Colonic mucosa (tissue), 4 donors: ENCODE measurements at regions of chr6 and their contacts with region 1.

Region 1: GRCh38 chr6:123074616-123075015 is 78.6 kb downstream of the CLVS2 start:
- DNase-seq: no peak
- H3K4me3 ChIP-seq: no peak overlapping the region
- H3K27ac ChIP-seq: no peak overlapping the region
- H3K4me1 ChIP-seq: no peaks in the 10 kb centered on the region
- H3K27me3 ChIP-seq: no peaks in the 10 kb centered on the region
- CTCF ChIP-seq: no peak

Region 2: DNA sequence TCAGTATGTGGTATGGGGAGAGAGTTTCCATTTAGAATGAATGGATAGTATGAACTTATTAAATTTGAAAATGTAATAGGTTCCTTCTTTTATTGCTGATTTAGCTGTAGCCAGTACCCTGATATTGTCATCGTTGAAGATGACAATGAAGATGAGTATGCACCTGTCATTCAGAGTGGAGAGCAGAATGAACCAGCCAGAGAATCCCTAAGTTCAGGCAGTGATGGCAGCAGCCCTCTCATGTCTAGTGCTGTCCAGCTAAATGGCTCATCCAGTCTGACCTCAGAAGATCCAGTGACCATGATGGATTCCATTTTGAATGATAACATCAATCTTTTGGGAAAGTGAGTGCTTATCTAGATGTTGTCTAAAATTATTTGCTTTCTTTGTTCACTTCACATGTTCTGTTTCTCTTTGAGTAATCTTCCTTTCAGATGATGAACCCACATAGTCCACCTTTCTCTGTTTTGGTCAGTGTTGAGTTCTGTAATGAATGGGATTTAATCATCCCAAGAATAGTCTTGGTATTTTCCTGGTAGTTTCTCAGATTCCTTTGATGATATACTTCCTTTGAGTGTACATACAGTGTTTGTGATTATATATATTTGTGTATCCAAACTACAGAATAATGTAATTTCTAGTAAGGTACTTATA is 651.9 kb before region 1 on chr6:
- intact Hi-C with region 1: no loop called
- DNase-seq: no peak
- H3K4me3 ChIP-seq: no peak overlapping the region
- H3K27ac ChIP-seq: no peak overlapping the region
- H3K4me1 ChIP-seq: no peaks in the 10 kb centered on the region
- H3K27me3 ChIP-seq: no peaks in the 10 kb centered on the region
- CTCF ChIP-seq: no peak

Region 3: DNA sequence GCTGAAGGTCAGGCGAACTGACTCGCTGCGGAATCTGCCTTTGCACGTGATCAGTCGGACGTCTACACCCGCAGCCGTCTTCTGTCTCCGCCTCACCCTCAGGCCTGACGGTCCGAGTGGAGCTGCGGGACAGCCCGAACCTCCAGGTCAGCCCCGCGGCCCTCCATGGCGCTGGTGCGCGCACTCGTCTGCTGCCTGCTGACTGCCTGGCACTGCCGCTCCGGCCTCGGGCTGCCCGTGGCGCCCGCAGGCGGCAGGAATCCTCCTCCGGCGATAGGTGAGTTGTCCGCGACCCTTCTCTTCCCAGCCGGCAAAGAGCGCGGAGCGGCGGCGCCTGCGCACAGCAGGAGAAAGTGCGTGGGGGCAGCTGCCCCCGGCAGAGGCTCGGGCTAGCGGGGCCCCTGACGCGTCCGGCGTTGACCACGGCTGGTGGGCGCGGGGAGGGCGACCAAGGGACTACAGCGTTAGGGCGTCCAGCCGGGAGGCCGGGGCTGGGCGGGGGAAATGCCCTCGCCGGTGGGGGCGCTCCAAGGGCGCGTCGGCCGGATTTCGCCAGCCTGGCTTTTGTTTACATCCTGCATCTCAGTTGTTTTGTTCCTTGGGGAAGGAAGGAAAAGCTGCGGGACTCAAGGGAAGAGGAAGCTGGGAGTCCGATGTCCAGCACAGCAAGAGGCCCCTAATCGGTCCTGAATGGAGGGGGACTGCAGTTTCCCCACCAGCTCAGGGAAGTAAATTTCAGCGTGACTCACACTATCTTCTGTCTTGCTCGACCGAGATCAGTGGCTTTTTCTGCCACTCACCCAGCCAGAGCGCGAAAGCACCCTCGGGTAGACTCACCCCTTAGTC is 285.2 kb before region 1 on chr6 and contains the start of gene SMPDL3A:
- intact Hi-C with region 1: no loop called
- DNase-seq: peak; percentile 88
- H3K4me3 ChIP-seq: peak within 1 kb of the TSS; percentile 64
- H3K27ac ChIP-seq: peak within 1 kb of the TSS; percentile 98
- H3K4me1 ChIP-seq: no peaks in the 10 kb centered on the region
- H3K27me3 ChIP-seq: no peaks in the 10 kb centered on the region
- CTCF ChIP-seq: no peak
- total RNA-seq, gene SMPDL3A: 47.5 to 86.5 TPM

Region 4: GRCh38 chr6:122887941-122888340 is 186.7 kb before region 1 on chr6:
- intact Hi-C with region 1: no loop called
- DNase-seq: no peak
- H3K4me3 ChIP-seq: no peak overlapping the region
- H3K27ac ChIP-seq: no peak overlapping the region
- H3K4me1 ChIP-seq: no peaks in the 10 kb centered on the region
- H3K27me3 ChIP-seq: no peaks in the 10 kb centered on the region
- CTCF ChIP-seq: no peak

Region 5: DNA sequence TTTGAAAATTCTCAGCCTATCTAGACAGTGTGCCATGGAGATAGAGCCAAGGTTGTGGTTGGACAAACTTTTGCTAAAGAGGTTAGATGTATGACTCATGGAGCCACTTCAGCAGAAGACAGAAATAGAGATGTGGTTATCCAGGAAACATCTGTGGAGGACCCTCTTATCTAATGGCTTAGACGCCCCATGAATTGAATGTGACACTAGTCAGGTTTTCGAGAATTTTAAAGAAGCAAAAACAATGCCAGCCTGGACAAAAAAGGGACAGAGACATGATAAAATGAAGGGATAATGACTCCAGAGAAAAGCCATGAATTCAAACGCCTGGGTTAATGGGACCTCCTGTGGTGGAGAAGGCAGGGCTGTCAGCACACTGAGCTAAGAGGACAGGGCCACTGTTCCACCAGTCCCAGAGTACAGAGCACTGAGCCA is 201.9 kb after region 1 on chr6:
- intact Hi-C with region 1: loop called (anchors 10 kb)
- DNase-seq: no peak
- H3K4me3 ChIP-seq: no peak overlapping the region
- H3K27ac ChIP-seq: no peak overlapping the region
- H3K4me1 ChIP-seq: no peaks in the 10 kb centered on the region
- H3K27me3 ChIP-seq: no peaks in the 10 kb centered on the region
- CTCF ChIP-seq: no peak

Region 6: DNA sequence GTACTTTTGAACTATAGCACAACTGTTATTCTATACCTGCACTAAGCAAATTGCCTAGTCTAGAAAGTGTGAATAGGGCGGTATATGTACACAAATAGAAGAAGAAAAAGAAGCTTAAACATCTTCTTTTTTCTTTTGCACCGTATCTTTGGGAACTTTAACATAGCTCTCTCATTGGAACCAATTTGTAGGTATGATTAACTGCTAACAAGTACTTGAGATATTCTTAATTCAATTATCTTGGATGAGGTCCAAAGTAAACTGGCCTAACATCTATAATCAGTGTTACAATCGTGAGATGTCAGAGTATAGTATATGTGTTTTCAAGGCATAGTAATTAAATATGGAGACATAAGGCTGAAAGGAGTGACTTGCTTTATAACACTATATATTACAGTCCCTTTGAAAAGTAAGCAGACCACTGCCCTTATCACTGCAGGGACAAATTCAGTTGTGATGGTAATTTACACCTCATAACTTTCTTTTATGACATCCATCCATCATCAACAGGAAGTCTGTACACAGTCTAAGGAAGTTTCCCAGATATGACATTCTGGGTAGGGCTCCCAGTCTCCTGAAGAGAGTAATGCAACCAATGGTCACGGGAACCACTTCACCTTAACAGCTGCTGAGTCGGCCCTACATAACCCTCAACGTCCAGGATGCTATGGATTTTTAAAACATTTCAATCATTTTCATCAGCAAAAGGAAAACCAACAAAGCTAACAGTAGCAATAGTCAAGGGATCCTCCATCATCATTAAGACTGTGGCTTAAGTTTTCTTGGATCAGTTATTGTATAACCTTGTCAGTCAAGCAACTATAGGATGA is 766.7 kb after region 1 on chr6:
- intact Hi-C with region 1: no loop called
- DNase-seq: no peak
- H3K4me3 ChIP-seq: no peak overlapping the region
- H3K27ac ChIP-seq: no peak overlapping the region
- H3K4me1 ChIP-seq: no peaks in the 10 kb centered on the region
- H3K27me3 ChIP-seq: no peaks in the 10 kb centered on the region
- CTCF ChIP-seq: no peak